Activated CD4-positive, alpha-beta memory T cell treated with anti-CD3 and anti-CD28 coated beads for 36 hours (primary cell): ENCODE measurements at regions of chr10 and their contacts with region 1.

Region 1: GRCh38 chr10:37584652-37585051 is 272.8 kb downstream of the ZNF248 start:
- DNase-seq: no peak
- H3K4me3 Mint-ChIP-seq: no peak overlapping the region
- H3K27ac Mint-ChIP-seq: no peak overlapping the region
- H3K4me1 Mint-ChIP-seq: no peaks in the 10 kb centered on the region
- H3K27me3 Mint-ChIP-seq: no peaks in the 10 kb centered on the region

Region 2: DNA sequence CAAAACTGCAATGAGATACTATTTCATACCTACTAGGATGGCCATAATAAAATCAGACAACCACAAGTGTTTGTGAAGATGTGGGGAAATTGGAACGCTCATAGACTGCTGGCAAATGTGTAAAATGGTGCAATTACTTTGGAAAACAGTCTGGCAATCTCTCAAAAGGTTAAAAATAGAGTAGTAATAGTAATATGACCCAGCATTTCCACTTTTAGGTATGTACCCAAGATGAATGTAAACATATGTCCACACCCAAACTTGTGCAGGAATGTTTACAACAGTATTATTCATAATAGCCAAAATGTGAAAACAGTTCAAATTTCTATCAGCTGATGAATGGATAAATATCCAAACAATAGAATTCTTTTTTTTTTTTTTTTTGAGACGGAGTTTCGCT is 1190.9 kb before region 1 on chr10:
- CTCF ChIA-PET with region 1: no interaction called
- POLR2A ChIA-PET with region 1: no interaction called
- intact Hi-C with region 1: loop called (anchors 10 kb)
- DNase-seq: no peak
- H3K4me3 Mint-ChIP-seq: no peak overlapping the region
- H3K27ac Mint-ChIP-seq: no peak overlapping the region
- H3K4me1 Mint-ChIP-seq: no peaks in the 10 kb centered on the region
- H3K27me3 Mint-ChIP-seq: no peaks in the 10 kb centered on the region